HEK293T (cell line): ENCODE measurements at regions of chr12 and their contacts with region 1.

Region 1: GRCh38 chr12:48882315-48882687 is 16.6 kb upstream of the RND1 start:
- DNase-seq: no peak

Region 2: GRCh38 chr12:48865434-48866290 is 16.6 kb before region 1 on chr12 and contains the start of gene RND1:
- CTCF ChIA-PET with region 1: no interaction called
- POLR2A ChIA-PET with region 1: interaction called, 25 read pairs
- DNase-seq: peak; percentile 95